GM12878 (cell line): ENCODE measurements at regions of chr12 and their contacts with region 1.

Region 1: GRCh38 chr12:124863416-124864325 is at the start of gene SCARB1:
- DNase-seq: peak; percentile 26
- ATAC-seq: peak; percentile 84
- H3K4me3 ChIP-seq: peak within 1 kb of the TSS; percentile 97
- H3K27ac ChIP-seq: peak within 1 kb of the TSS; percentile 80
- H3K4me1 ChIP-seq: peaks cover 11% of the 10 kb centered on the region
- H3K27me3 ChIP-seq: no peaks in the 10 kb centered on the region
- CTCF ChIP-seq: no peak
- EP300 ChIP-seq: no peak
- POLR2A ChIP-seq: peak; percentile 98
- RAD21 ChIP-seq: no peak
- polyA plus RNA-seq, gene SCARB1: 0.34 to 3.3 TPM

Region 2: GRCh38 chr12:124636138-124636978 is 227.3 kb before region 1 on chr12:
- CTCF ChIA-PET with region 1: no interaction called
- POLR2A ChIA-PET with region 1: no interaction called
- RAD21 ChIA-PET with region 1: no interaction called
- SMC1A ChIA-PET with region 1: no interaction called
- in situ Hi-C with region 1: no loop called
- intact Hi-C with region 1: no loop called
- DNase-seq: peak; percentile 11
- ATAC-seq: peak; percentile 51
- H3K4me3 ChIP-seq: no peak overlapping the region
- H3K27ac ChIP-seq: no peak overlapping the region
- H3K4me1 ChIP-seq: no peaks in the 10 kb centered on the region; the same call in 1 of the 2 replicates
- H3K27me3 ChIP-seq: no peaks in the 10 kb centered on the region; a peak in 1 of 4 replicates
- CTCF ChIP-seq: no peak
- EP300 ChIP-seq: no peak
- POLR2A ChIP-seq: no peak
- RAD21 ChIP-seq: no peak

Region 3: GRCh38 chr12:124795081-124795948 is 68.4 kb before region 1 on chr12:
- CTCF ChIA-PET with region 1: no interaction called
- POLR2A ChIA-PET with region 1: interaction called, 4 read pairs
- RAD21 ChIA-PET with region 1: interaction called, 11 read pairs
- SMC1A ChIA-PET with region 1: interaction called, 10 read pairs
- in situ Hi-C with region 1: no loop called
- intact Hi-C with region 1: no loop called
- DNase-seq: no peak
- ATAC-seq: peak; percentile 98
- H3K4me3 ChIP-seq: no peak overlapping the region
- H3K27ac ChIP-seq: peak overlapping the region; percentile 89
- H3K4me1 ChIP-seq: peaks cover 25% of the 10 kb centered on the region
- H3K27me3 ChIP-seq: no peaks in the 10 kb centered on the region
- CTCF ChIP-seq: no peak
- EP300 ChIP-seq: 0 out of 4 replicates have a peak, but pooled peaks of 1 of the 2 experiments have one; percentile 17
- POLR2A ChIP-seq: peak; percentile 59
- RAD21 ChIP-seq: no peak

Region 4: DNA sequence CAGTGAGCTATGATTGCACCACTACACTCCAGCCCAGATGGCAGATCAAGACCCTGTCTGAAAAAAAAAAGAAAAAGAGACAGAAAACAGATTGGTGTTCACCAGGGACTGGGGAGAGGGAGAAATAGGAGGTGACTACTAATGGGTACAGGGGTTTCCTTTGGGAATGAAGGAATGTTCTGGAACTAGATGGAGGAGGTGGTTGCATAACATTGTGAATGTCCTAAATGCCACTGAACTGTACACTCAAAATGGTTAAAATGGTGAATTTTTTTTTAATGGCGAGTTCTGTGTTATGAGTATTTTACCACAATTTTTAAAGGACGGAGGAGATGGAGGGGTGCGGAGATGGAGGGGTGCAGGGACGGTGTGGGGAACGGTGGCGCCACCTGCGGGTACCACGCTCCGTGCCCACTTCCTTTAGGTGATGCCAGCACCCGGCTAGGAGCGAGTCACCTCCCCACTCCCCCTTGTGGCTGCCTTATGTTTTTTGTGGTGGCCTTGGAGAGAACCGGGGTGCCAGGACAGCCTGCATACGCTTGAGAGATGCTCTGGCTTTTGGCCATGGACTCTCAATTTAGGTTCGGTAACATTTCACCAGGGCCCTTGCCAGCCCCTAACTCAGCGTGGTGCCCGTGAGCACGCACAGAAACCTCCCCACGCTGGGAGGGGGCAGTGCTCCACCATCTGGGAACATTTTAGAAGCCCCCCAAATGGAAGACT is 34.7 kb after region 1 on chr12:
- CTCF ChIA-PET with region 1: interaction called, 12 read pairs
- POLR2A ChIA-PET with region 1: interaction called, 15 read pairs
- RAD21 ChIA-PET with region 1: interaction called, 20 read pairs
- SMC1A ChIA-PET with region 1: interaction called, 7 read pairs
- in situ Hi-C with region 1: no loop called
- intact Hi-C with region 1: loop called (anchors 2 kb)
- DNase-seq: no peak
- ATAC-seq: peak; percentile 74
- H3K4me3 ChIP-seq: no peak overlapping the region; the same call in 1 of the 2 replicates
- H3K27ac ChIP-seq: peak overlapping the region; percentile 27
- H3K4me1 ChIP-seq: peaks cover 32% of the 10 kb centered on the region
- H3K27me3 ChIP-seq: no peaks in the 10 kb centered on the region
- CTCF ChIP-seq: peak; percentile 72 to 81 (median 78)
- EP300 ChIP-seq: no peak
- POLR2A ChIP-seq: no peak
- RAD21 ChIP-seq: peak; percentile 60